BJ (cell line): ENCODE measurements at regions of chr1 and their contacts with region 1.

Region 1: DNA sequence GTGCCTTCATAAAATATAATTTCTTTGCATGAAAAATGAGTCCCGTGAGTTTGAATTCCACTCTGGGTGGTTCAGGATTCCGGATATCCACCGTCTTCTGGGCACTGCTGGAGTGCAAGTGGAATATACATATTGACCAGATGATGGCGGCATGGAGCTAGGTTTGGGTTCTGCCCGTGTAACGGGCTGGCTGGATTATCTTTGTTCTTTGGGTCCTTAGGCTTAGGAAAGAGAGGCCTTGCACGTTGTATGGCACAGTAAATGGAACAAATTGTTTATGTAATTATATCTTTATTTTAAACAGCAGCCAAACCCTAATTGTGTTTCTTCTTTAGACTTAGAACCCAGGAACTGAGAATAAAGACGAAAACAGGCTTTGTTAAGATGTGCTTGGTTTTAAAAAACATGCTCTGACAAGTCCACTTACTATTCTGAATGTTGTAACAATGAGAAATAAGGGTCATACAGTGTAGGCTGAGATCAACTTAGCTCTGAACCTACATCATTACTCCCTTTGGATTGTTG is 13.5 kb upstream of the ACBD6 start:
- DNase-seq: peak; percentile 41
- H3K4me3 ChIP-seq: no peak overlapping the region
- H3K27me3 ChIP-seq: no peaks in the 10 kb centered on the region
- CTCF ChIP-seq: peak; percentile 77

Region 2: GRCh38 chr1:180382317-180383115 is 133.4 kb before region 1 on chr1:
- CTCF ChIA-PET with region 1: no interaction called
- POLR2A ChIA-PET with region 1: no interaction called
- DNase-seq: no peak
- H3K4me3 ChIP-seq: no peak overlapping the region
- H3K27me3 ChIP-seq: no peaks in the 10 kb centered on the region
- CTCF ChIP-seq: no peak

Region 3: DNA sequence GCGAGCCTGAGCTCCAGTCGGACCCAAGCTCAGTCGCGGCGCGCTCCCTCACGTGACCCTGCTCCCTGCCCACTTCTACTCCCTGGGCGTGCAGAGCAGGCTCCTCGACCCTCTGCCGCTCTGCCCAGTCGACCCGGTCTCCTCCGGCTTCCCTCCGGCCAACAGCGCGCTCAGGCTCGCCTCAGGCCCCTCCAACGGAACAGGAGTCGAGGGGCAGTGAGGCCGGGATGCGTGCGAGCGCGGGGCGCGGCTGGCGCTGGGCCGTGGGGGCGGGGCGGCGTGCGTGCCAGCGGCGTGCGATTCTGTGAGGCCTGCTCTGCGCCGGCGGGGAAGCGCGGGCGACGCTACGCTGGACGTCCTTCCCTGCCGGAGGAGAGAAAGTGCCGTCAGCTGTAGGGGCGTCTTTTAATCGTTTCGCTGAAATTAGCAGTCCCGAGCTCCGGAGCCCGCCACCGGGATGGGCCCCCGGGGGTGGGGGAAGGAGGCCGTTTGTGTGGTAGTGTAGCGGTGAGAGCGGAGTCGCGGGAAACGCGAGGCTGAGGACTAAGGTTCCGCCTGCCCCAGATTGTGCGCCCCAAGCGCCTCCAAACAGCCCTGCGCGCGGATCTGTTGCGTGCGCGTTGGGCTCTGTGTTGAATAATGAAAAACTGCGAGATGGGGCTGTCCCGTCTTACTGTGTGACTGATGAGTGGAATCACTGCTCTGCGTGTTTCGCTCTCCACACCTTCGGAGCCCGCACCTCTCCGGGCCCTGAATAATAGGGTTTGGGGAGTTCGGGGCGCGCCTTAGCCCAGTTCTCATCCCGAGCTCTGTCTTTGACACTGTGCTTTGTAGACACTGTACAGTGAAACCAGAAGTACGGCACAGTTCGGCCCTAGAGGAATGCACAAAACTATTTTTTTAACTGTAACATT is 13.3 kb before region 1 on chr1 and contains the start of gene ACBD6:
- CTCF ChIA-PET with region 1: interaction called, 40 read pairs
- POLR2A ChIA-PET with region 1: no interaction called
- DNase-seq: no peak
- H3K4me3 ChIP-seq: peak within 1 kb of the TSS; percentile 95
- H3K27me3 ChIP-seq: no peaks in the 10 kb centered on the region
- CTCF ChIP-seq: peak; percentile 34; the same call in 1 of the 2 replicates
- polyA plus RNA-seq, gene ACBD6: 47.4 and 49.0 TPM in 2 replicates

Region 4: GRCh38 chr1:180533266-180533987 is 17.5 kb after region 1 on chr1:
- CTCF ChIA-PET with region 1: interaction called, 15 read pairs
- POLR2A ChIA-PET with region 1: no interaction called
- DNase-seq: no peak
- H3K4me3 ChIP-seq: no peak overlapping the region
- H3K27me3 ChIP-seq: no peaks in the 10 kb centered on the region
- CTCF ChIP-seq: peak; percentile 79

Region 5: DNA sequence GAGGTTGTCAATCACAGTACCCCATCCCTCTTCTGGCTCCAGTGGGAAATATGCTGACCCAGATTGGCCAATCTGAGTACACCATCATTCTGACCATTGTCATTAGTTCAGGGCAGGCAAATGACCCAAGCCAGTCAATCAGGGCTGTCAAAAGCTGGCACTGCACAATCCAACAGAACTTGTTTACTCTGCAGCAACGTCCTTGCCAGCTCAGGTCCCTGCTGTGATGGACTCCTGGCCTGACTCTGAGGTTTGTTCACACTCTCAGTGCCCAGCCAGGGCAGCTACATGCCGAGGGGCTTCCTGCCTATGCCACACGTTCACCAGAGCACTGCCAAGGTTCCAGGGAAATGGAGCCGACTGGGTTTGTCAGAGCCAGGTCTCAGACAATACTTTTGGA is 28.1 kb after region 1 on chr1:
- CTCF ChIA-PET with region 1: no interaction called
- POLR2A ChIA-PET with region 1: no interaction called
- DNase-seq: no peak
- H3K4me3 ChIP-seq: no peak overlapping the region
- H3K27me3 ChIP-seq: no peaks in the 10 kb centered on the region
- CTCF ChIP-seq: no peak

Region 6: DNA sequence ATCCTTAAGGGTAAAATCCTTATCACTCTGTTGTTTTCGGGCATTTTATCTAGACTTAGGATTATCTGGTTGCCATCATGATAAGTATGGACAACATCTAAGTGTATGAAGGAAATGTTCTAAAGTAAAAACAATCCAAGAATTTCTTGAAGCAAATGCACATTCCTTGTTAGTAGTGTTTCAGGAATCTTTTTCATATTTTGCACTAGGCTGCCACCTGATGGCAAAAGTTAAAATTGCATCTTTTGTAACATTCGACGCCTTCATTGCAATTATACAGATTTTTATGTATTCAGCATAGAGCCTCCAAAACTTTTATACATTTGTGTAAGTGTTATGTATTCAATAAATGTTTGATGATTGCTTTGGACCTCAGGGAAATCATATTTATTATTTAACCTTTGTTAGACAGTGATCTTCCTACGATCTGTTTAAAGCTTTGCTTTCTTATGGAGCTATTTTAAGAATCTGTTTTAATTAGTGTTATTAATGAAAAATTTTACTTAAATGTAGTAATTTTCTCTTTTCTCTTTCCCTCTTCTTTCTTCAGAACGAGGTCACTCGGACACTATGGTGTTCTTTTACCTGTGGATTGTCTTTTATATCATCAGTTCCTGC is 347.3 kb after region 1 on chr1:
- CTCF ChIA-PET with region 1: interaction called, 137 read pairs
- POLR2A ChIA-PET with region 1: no interaction called
- DNase-seq: peak; percentile 30
- H3K4me3 ChIP-seq: no peak overlapping the region
- H3K27me3 ChIP-seq: no peaks in the 10 kb centered on the region
- CTCF ChIP-seq: peak; percentile 63